Activated naive CD4-positive, alpha-beta T cell treated with anti-CD3 and anti-CD28 coated beads for 36 hours (primary cell): ENCODE measurements at regions of chr19 and their contacts with region 1.

Region 1: DNA sequence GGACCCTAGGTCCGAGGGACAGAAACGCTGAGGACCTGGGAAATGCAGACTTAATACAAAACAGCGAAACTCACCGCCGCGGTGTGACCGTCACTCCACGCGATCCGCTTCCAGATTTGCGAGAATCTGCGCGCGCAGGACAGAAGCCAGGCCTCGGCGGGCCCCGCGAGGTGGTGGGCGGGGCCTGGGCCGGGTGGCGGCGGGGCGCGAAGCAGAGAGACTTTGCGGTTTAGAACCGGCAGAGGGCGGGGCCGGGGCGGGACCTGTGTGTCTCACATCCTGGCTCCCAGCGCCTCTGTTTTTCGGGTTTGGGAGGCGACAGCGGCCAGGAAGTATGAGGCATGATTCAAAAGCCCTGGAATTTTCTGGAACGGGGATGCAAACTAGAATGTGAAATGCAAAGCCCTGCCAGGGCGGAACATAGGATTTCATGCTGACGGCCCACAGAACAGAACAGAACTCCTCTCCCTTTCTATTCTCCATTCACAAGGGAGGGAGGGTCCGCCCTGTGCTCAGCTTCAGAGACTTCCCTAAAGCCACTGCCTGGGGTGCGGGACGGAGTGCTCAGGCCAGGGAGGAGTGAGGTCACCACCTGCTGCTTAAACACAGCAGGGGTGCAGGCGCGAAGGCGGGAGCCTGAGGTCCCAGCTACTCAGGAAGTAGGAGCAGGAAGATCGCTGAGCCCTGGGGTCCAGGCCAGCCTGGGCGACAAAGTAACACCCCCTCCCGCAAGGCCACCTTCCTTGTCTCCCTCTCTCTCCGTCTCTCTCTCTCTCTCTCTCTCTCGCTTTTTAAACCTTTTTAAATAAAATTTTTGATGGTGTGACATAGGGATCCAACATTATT is 44.3 kb downstream of the ZNF611 start:
- DNase-seq: peak; percentile 95
- H3K4me3 Mint-ChIP-seq: peak overlapping the region; percentile 96
- H3K27ac Mint-ChIP-seq: peak overlapping the region; percentile 93
- H3K4me1 Mint-ChIP-seq: peaks cover 17% of the 10 kb centered on the region
- H3K27me3 Mint-ChIP-seq: no peaks in the 10 kb centered on the region

Region 2: DNA sequence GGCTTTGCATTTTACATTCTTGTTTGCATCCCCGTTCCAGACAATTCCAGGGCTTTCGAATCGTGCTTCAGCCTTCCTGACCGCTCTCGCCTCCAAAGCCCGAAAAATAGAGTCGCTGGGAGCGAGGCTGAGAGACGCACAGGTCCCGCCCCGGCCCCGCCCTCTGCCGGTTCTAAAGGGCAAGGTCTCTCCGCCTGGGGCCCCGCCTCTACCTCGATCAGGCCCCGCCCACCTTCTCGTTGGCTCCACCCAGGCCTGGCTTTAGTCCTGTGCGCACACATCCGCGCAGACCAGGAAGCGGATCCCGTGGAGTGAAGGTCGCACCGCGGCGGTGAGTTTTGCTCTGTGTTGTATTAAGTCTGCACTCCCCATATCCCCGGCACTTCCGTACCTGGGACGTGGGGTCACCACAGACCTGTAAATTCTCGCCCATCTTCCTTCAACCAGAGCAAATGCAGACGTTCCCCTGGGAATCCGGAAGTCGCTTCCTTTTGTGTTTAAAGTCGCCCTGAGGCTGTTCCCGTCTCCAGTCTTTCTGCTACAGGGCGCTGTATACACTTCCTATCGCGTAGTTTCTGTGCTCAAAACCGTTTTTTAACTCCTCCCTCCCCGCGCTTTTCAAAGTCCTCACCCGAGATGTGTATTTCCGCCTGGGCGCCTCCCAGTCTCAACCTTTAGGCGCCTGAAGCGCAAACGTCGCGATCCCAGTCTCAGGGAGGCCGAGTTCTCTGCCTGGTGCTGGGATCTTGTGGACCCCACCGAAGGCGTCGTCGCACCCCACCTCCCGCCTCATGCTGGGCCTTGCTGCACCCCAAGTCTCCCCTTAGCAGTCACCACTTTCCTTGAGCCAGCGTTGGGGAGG is 120.4 kb before region 1 on chr19 and contains the start of gene ZNF701:
- CTCF ChIA-PET with region 1: no interaction called
- intact Hi-C with region 1: loop called (anchors 1 kb)
- DNase-seq: peak; percentile 97
- H3K4me3 Mint-ChIP-seq: peak within 1 kb of the TSS; percentile 92
- H3K27ac Mint-ChIP-seq: peak within 1 kb of the TSS; percentile 93
- H3K4me1 Mint-ChIP-seq: peaks cover 31% of the 10 kb centered on the region
- H3K27me3 Mint-ChIP-seq: no peaks in the 10 kb centered on the region
- total RNA-seq, gene ZNF701: 13.8 to 15.0 TPM

Region 3: DNA sequence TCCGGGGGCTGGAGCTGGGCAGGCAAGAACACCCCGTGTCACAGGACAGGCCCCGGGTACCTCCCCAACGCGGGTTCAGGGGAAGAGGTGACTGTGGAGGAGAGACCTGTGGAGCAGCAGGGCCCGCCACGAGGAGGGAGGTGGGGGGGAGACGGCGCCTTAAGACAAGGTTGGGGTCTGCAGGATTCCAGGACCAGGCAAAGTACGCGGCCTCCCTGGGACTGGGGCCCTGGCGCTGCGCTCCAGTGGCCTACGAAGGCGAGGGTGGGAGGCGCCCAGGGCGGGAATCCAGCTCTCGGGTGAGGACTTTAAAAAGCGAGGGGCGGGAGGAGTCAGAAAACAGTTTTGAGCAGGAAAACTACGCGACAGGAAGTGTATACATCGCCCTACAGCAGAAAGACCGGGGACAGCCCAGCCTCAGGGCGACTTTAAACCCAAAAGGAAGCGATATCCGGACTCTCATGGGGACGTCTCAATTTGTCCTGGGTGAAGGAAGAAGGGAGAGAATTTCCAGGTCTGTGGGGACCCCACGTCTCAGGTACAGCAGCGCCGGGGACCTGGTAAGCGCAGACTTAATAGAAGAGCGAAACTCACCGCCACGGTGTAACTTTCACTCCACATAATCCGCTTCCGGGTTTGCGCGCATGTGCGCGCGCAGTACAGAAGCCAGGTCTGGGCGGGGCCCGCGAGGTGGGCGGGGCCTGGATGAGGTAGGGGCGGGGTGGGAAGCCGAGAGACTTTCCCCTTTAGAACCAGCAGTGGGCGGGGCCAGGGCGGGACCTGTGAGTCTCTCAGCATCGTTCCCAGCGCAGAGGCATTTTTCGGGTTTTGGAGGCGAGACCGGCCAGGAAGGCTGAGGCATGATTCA is 52.6 kb before region 1 on chr19 and contains the start of gene ZNF83:
- CTCF ChIA-PET with region 1: no interaction called
- intact Hi-C with region 1: loop called (anchors 5 kb)
- DNase-seq: peak; percentile 96
- H3K4me3 Mint-ChIP-seq: peak within 1 kb of the TSS; percentile 85
- H3K27ac Mint-ChIP-seq: peak within 1 kb of the TSS; percentile 92
- H3K4me1 Mint-ChIP-seq: peaks cover 9% of the 10 kb centered on the region
- H3K27me3 Mint-ChIP-seq: no peaks in the 10 kb centered on the region
- total RNA-seq, gene ZNF83: 23.3 to 23.9 TPM

Region 4: DNA sequence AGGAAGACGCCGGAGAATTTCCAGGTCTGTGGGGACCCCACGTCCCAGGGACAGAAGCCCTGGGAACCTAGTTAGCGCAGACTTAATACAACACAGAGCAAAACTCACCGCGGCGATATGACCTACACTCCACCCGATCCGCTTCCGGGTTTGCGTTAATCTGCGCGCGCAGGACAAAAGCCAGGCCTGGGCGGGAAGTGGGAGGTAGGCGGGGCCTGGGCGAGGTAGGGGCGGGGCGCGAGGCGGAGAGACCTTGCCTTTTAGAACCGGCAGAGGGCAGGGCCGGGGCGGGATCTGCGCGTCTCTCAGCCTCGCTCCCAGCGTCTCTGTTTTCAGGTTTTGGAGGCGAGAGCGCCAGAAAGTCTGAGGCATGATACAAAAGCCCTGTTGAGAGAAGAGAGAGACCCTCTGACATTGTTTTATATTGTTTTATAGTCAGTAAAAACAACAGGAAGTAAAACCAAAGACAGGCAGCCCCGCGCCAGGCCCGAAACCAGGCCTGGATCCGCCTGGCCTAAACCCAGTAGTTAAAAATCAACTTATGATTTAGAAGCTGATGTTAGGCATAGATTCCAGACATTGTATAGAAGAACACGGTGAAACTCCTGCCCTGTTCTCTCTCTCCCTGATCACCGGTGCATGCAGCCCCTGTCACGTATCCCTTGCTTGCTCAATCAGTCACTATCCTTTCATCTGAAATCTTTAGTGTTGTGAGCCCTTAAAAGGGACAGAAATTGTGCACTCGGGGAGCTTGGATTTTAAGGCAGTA is 44.5 kb after region 1 on chr19 and contains the start of gene ZNF611:
- CTCF ChIA-PET with region 1: no interaction called
- intact Hi-C with region 1: loop called (anchors 2 kb)
- DNase-seq: peak; percentile 99
- H3K4me3 Mint-ChIP-seq: peak within 1 kb of the TSS; percentile 85
- H3K27ac Mint-ChIP-seq: peak within 1 kb of the TSS; percentile 89
- H3K4me1 Mint-ChIP-seq: peaks cover 19% of the 10 kb centered on the region
- H3K27me3 Mint-ChIP-seq: no peaks in the 10 kb centered on the region
- total RNA-seq, gene ZNF611: 10.4 to 12.1 TPM

Region 5: GRCh38 chr19:52853880-52854279 is 163.3 kb after region 1 on chr19:
- CTCF ChIA-PET with region 1: no interaction called
- intact Hi-C with region 1: no loop called
- DNase-seq: no peak
- H3K4me3 Mint-ChIP-seq: no peak overlapping the region
- H3K27ac Mint-ChIP-seq: no peak overlapping the region
- H3K4me1 Mint-ChIP-seq: peaks cover 18% of the 10 kb centered on the region
- H3K27me3 Mint-ChIP-seq: no peaks in the 10 kb centered on the region